ENCODE measurements at regions of chr4 and their contacts with region 1.

Region 1: DNA sequence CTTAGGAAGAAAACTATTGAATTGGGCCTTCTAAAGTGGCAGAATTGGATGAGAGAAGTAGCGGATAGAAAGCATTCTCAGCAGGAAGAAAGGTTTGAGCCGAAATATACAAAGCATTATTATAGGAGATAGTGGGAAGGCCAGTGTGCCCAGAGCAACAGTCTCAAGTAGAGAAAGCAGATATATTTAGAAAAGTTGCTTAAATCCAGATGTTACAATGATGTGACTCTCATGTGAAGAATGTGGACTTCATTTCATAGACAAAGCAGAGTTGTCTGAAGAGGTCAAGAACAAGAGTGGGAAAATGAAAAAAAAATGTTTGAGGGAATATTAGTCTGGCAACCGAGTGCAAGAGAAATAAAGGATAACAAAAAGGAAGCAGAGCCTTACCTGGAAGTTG is 66.9 kb downstream of the SYNPO2 start:
- DNase-seq: no peak
- H3K4me3 ChIP-seq: no peak overlapping the region
- H3K27ac ChIP-seq: no peak overlapping the region
- H3K4me1 ChIP-seq: no peaks in the 10 kb centered on the region
- H3K27me3 ChIP-seq: no peaks in the 10 kb centered on the region
- CTCF ChIP-seq: no peak

Region 2: DNA sequence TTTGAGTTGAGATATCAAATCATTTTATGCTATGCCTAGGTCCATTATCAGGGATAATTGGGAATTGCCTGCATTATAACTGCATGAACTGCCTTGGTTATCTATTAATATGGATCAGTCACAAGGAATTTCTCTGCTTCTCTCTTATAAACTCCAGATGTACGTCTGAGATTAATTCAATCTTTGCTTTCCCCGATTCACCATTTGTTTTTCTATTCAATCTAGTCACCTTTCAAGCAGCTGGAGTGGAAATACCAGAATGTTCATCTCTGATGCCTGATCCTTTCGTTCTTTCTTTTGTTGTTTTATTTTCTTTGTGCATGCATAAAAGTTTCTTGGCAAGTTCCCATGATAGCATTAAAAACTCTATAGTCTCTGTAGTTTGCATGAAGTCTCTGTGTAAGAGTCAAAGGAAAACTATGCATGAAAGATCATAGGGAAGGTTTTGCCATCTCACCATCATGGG is 44.2 kb before region 1 on chr4:
- CTCF ChIA-PET with region 1: interaction called, 17 read pairs
- POLR2A ChIA-PET with region 1: no interaction called
- intact Hi-C with region 1: no loop called
- DNase-seq: no peak
- H3K4me3 ChIP-seq: no peak overlapping the region
- H3K27ac ChIP-seq: no peak overlapping the region
- H3K4me1 ChIP-seq: no peaks in the 10 kb centered on the region
- H3K27me3 ChIP-seq: no peaks in the 10 kb centered on the region
- CTCF ChIP-seq: no peak